CD14-positive monocyte (primary cell): ENCODE measurements at regions of chr22 and their contacts with region 1.

Region 1: GRCh38 chr22:36470162-36470993 is 11.1 kb downstream of the TXN2 start:
- DNase-seq: peak; percentile 76 to 81 (median 76)
- H3K4me3 ChIP-seq: no peak overlapping the region
- H3K4me3 Mint-ChIP-seq: no peak overlapping the region
- H3K27ac ChIP-seq: no peak overlapping the region
- H3K27ac Mint-ChIP-seq: peak overlapping the region in 1 of 7 donors; percentile 19
- H3K4me1 ChIP-seq: peaks cover 57 to 60% of the 10 kb centered on the region in 2 donors
- H3K4me1 Mint-ChIP-seq: peaks cover 61% of the 10 kb centered on the region
- H3K27me3 ChIP-seq: no peaks in the 10 kb centered on the region
- H3K27me3 Mint-ChIP-seq: peaks cover 3 to 5% (median 3%) of the 10 kb centered on the region in 3 donors
- CTCF ChIP-seq: peak; percentile 92

Region 2: DNA sequence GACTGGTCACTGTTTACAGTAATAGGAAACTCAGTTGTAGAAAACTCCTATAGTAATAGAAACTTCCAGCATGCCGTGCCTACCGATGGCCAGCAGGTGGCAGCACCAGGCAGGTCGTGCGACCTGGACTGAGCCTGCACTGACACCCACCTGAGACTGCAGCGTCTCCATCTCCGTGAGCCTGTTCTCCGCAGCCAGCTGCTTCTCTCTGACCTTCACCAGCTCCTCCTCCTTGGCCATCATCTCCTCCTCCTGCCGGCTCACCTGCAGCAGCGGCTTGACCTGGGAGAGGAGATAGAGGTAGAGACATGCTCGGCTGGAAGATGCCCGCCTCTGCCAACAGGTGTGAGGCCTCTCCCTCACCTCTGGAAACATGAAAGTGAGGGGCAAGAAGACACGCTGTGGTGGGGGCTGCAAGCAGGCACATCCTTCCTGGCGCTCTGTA is 169.0 kb before region 1 on chr22:
- intact Hi-C with region 1: loop called (anchors 1 kb)
- DNase-seq: peak; percentile 53 to 66 (median 59)
- H3K4me3 ChIP-seq: no peak overlapping the region
- H3K4me3 Mint-ChIP-seq: no peak overlapping the region
- H3K27ac ChIP-seq: peak overlapping the region in 1 of 2 donors; percentile 53
- H3K27ac Mint-ChIP-seq: peak overlapping the region in 2 of 7 donors; percentile 8 to 20
- H3K4me1 ChIP-seq: no peaks in the 10 kb centered on the region
- H3K4me1 Mint-ChIP-seq: no peaks in the 10 kb centered on the region
- H3K27me3 ChIP-seq: no peaks in the 10 kb centered on the region
- H3K27me3 Mint-ChIP-seq: no peaks in the 10 kb centered on the region
- CTCF ChIP-seq: peak; percentile 94

Region 3: GRCh38 chr22:36439481-36440271 is 30.7 kb before region 1 on chr22:
- intact Hi-C with region 1: no loop called
- DNase-seq: peak in 1 of 3 donors; percentile 71
- H3K4me3 ChIP-seq: no peak overlapping the region
- H3K4me3 Mint-ChIP-seq: no peak overlapping the region
- H3K27ac ChIP-seq: no peak overlapping the region
- H3K27ac Mint-ChIP-seq: peak overlapping the region in 1 of 7 donors; percentile 19
- H3K4me1 ChIP-seq: peaks cover 37 to 52% of the 10 kb centered on the region in 2 donors
- H3K4me1 Mint-ChIP-seq: peaks cover 47% of the 10 kb centered on the region
- H3K27me3 ChIP-seq: no peaks in the 10 kb centered on the region
- H3K27me3 Mint-ChIP-seq: peaks cover 0 to 5% (median 5%) of the 10 kb centered on the region in 3 donors
- CTCF ChIP-seq: no peak

Region 4: GRCh38 chr22:36757668-36758211 is 287.4 kb after region 1 on chr22:
- intact Hi-C with region 1: no loop called
- DNase-seq: peak; percentile 61 to 77 (median 76)
- H3K4me3 ChIP-seq: no peak overlapping the region
- H3K4me3 Mint-ChIP-seq: no peak overlapping the region
- H3K27ac ChIP-seq: no peak overlapping the region
- H3K27ac Mint-ChIP-seq: no peak overlapping the region
- H3K4me1 ChIP-seq: peaks cover 8% of the 10 kb centered on the region in 2 donors
- H3K4me1 Mint-ChIP-seq: peaks cover 9% of the 10 kb centered on the region
- H3K27me3 ChIP-seq: no peaks in the 10 kb centered on the region
- H3K27me3 Mint-ChIP-seq: peaks cover 14 to 29% (median 15%) of the 10 kb centered on the region in 3 donors
- CTCF ChIP-seq: peak; percentile 95